Caco-2 (cell line): ENCODE measurements at regions of chr3 and their contacts with region 1.

Region 1: GRCh38 chr3:48556793-48557626 is at the start of gene PFKFB4:
- DNase-seq: peak; percentile 99
- H3K4me3 ChIP-seq: peak within 1 kb of the TSS; percentile 62
- H3K4me3 Mint-ChIP-seq: peak within 1 kb of the TSS; percentile 81
- H3K27ac Mint-ChIP-seq: peak within 1 kb of the TSS; percentile 63
- H3K4me1 ChIP-seq: peaks cover 28% of the 10 kb centered on the region
- H3K4me1 Mint-ChIP-seq: peaks cover 21% of the 10 kb centered on the region
- H3K27me3 ChIP-seq: no peaks in the 10 kb centered on the region
- H3K27me3 Mint-ChIP-seq: no peaks in the 10 kb centered on the region
- CTCF ChIP-seq: no peak
- total RNA-seq, gene PFKFB4: 11.2 and 14.4 TPM in 2 replicates

Region 2: GRCh38 chr3:48188266-48189201 is 368.5 kb before region 1 on chr3 and contains the start of gene CDC25A:
- CTCF ChIA-PET with region 1: interaction called, 9 read pairs
- POLR2A ChIA-PET with region 1: no interaction called
- intact Hi-C with region 1: loop called (anchors 5 kb)
- DNase-seq: peak; percentile 97 to 99
- H3K4me3 ChIP-seq: peak within 1 kb of the TSS; percentile 95
- H3K4me3 Mint-ChIP-seq: peak within 1 kb of the TSS; percentile 95
- H3K27ac Mint-ChIP-seq: peak within 1 kb of the TSS; percentile 90
- H3K4me1 ChIP-seq: peaks cover 9% of the 10 kb centered on the region; the same call in 1 of the 2 replicates
- H3K4me1 Mint-ChIP-seq: peaks cover 6% of the 10 kb centered on the region
- H3K27me3 ChIP-seq: no peaks in the 10 kb centered on the region
- H3K27me3 Mint-ChIP-seq: no peaks in the 10 kb centered on the region
- CTCF ChIP-seq: no peak
- total RNA-seq, gene CDC25A: 32.1 and 35.5 TPM in 2 replicates

Region 3: GRCh38 chr3:48347500-48347899 is 209.5 kb before region 1 on chr3:
- CTCF ChIA-PET with region 1: no interaction called
- POLR2A ChIA-PET with region 1: no interaction called
- intact Hi-C with region 1: no loop called
- DNase-seq: peak; percentile 18 to 69
- H3K4me3 ChIP-seq: no peak overlapping the region
- H3K4me3 Mint-ChIP-seq: no peak overlapping the region
- H3K27ac Mint-ChIP-seq: peak overlapping the region; percentile 39
- H3K4me1 ChIP-seq: peaks cover 49% of the 10 kb centered on the region
- H3K4me1 Mint-ChIP-seq: peaks cover 38% of the 10 kb centered on the region
- H3K27me3 ChIP-seq: no peaks in the 10 kb centered on the region
- H3K27me3 Mint-ChIP-seq: no peaks in the 10 kb centered on the region
- CTCF ChIP-seq: no peak

Region 4: GRCh38 chr3:48465531-48466378 is 91.3 kb before region 1 on chr3:
- CTCF ChIA-PET with region 1: interaction called, 4 read pairs
- POLR2A ChIA-PET with region 1: interaction called, 4 read pairs
- intact Hi-C with region 1: loop called (anchors 1 kb)
- DNase-seq: peak; percentile 97
- H3K4me3 ChIP-seq: no peak overlapping the region
- H3K4me3 Mint-ChIP-seq: peak overlapping the region; percentile 56
- H3K27ac Mint-ChIP-seq: peak overlapping the region; percentile 99
- H3K4me1 ChIP-seq: peaks cover 19% of the 10 kb centered on the region
- H3K4me1 Mint-ChIP-seq: peaks cover 16% of the 10 kb centered on the region
- H3K27me3 ChIP-seq: no peaks in the 10 kb centered on the region
- H3K27me3 Mint-ChIP-seq: no peaks in the 10 kb centered on the region
- CTCF ChIP-seq: peak; percentile 61 to 83

Region 5: GRCh38 chr3:48507351-48508061 is 49.5 kb before region 1 on chr3:
- CTCF ChIA-PET with region 1: interaction called, 3 read pairs
- POLR2A ChIA-PET with region 1: no interaction called
- intact Hi-C with region 1: loop called (anchors 1 kb)
- DNase-seq: peak; percentile 90 to 93
- H3K4me3 ChIP-seq: no peak overlapping the region
- H3K4me3 Mint-ChIP-seq: peak overlapping the region; percentile 7
- H3K27ac Mint-ChIP-seq: peak overlapping the region; percentile 67
- H3K4me1 ChIP-seq: peaks cover 35% of the 10 kb centered on the region
- H3K4me1 Mint-ChIP-seq: peaks cover 14% of the 10 kb centered on the region
- H3K27me3 ChIP-seq: no peaks in the 10 kb centered on the region
- H3K27me3 Mint-ChIP-seq: no peaks in the 10 kb centered on the region
- CTCF ChIP-seq: peak; percentile 81 to 91

Region 6: DNA sequence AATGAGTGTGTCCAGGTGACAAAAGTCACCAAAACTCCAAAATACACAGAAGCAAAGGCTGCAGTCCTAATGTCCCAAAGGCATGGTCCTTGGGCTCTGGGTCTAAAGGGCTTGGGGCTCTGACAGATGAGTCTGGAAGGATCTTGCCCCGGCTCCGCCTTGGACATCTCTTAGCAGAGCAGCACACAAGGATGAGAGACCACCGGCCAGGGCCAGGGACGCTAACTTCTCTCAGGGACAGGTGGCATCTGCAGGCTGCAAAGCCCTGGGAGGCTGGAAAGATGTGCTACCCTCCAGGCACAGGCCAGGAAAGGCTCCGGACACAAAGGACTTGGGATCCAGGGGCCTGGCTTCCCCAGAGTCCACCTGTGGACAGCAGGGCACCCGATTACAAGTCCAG is 38.9 kb before region 1 on chr3:
- CTCF ChIA-PET with region 1: no interaction called
- POLR2A ChIA-PET with region 1: no interaction called
- intact Hi-C with region 1: no loop called
- DNase-seq: no peak
- H3K4me3 ChIP-seq: no peak overlapping the region
- H3K4me3 Mint-ChIP-seq: no peak overlapping the region
- H3K27ac Mint-ChIP-seq: no peak overlapping the region
- H3K4me1 ChIP-seq: peaks cover 6% of the 10 kb centered on the region; the same call in 1 of the 2 replicates
- H3K4me1 Mint-ChIP-seq: no peaks in the 10 kb centered on the region
- H3K27me3 ChIP-seq: no peaks in the 10 kb centered on the region
- H3K27me3 Mint-ChIP-seq: no peaks in the 10 kb centered on the region
- CTCF ChIP-seq: no peak

Region 7: DNA sequence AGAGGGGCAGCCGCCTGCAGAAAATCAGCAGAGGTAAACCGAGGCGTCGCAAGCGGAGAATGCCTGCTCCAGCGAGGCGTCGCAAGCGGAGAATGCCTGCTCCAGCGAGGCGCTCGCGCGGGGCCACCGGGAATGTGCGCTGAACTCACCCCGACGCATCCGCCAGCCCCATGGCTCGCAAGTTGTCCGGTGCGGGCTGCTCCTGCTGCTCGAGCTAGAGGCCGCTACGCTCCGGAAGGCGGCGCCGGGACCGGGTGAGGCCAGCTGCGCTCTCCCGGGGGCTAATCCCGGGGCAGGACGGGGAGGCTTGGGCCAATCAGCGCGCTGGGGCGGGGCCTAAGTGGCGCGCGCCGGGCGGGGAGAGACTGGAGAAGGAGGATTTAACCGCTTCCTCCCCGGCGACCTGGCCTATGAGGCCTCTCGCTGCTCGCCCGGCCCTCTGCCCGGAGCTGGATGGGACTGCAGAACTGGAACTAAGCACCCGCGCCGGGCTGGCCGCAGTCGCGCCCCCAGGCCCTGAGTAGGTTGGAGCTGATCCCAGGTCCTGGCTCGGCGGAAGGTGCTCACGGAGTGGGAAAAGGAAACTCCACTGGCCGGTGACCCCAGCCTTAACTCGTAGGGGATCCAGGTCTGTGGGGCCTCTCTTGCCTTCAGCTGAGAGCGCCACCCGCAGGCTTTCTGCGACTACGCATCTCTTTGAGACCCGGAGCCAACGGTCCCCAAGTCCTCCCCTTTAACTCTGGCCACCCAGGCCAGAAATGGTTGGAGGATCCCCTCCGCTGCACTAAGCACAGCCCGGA is 78.4 kb after region 1 on chr3 and contains the start of gene SLC26A6:
- CTCF ChIA-PET with region 1: interaction called, 4 read pairs
- POLR2A ChIA-PET with region 1: interaction called, 4 read pairs
- intact Hi-C with region 1: loop called (anchors 2 kb)
- DNase-seq: peak; percentile 96 to 98
- H3K4me3 ChIP-seq: peak within 1 kb of the TSS; percentile 83
- H3K4me3 Mint-ChIP-seq: peak within 1 kb of the TSS; percentile 78
- H3K27ac Mint-ChIP-seq: peak within 1 kb of the TSS; percentile 59
- H3K4me1 ChIP-seq: peaks cover 19% of the 10 kb centered on the region
- H3K4me1 Mint-ChIP-seq: peaks cover 21% of the 10 kb centered on the region
- H3K27me3 ChIP-seq: no peaks in the 10 kb centered on the region
- H3K27me3 Mint-ChIP-seq: no peaks in the 10 kb centered on the region
- CTCF ChIP-seq: peak in 1 of 2 experiments; percentile 43
- total RNA-seq, gene SLC26A6: 54.7 and 59.4 TPM in 2 replicates

Region 8: GRCh38 chr3:48885753-48886152 is 328.7 kb after region 1 on chr3:
- CTCF ChIA-PET with region 1: no interaction called
- POLR2A ChIA-PET with region 1: no interaction called
- intact Hi-C with region 1: no loop called
- DNase-seq: no peak
- H3K4me3 ChIP-seq: no peak overlapping the region
- H3K4me3 Mint-ChIP-seq: no peak overlapping the region
- H3K27ac Mint-ChIP-seq: no peak overlapping the region
- H3K4me1 ChIP-seq: no peaks in the 10 kb centered on the region
- H3K4me1 Mint-ChIP-seq: no peaks in the 10 kb centered on the region
- H3K27me3 ChIP-seq: no peaks in the 10 kb centered on the region
- H3K27me3 Mint-ChIP-seq: no peaks in the 10 kb centered on the region
- CTCF ChIP-seq: no peak

Region 9: DNA sequence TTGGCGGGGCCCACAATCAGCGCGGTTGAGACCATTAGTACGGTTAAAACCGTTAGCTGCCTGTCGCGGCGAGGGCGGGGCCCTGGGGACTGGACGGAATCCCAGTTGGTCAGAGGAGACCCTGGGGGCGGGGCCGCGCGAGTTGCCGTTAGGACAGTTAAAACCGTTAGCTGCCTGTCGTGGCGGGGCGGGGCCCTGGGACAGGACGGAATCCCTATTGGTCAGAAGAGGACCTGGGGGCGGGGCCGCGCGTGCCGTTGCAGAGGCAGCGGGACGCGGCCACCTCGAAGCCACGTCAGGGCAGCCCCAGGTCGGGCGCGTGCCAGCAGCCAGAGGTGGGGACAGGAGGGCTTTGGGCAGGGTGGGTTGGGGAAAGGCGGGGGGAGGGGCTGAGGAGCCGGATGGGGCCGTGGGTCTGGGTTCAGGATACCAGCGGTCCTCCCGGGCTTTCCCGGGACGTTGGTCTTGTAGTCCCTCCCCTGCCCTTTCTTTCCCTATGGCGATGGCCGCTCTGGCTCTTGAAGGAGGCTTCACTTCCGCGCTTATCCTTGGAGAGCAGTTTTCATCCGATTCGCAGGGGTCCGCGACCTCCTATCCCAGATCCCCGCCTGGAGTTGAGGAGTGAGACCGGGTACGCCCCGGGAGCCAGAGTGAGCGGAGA is 642.4 kb after region 1 on chr3:
- CTCF ChIA-PET with region 1: no interaction called
- POLR2A ChIA-PET with region 1: no interaction called
- intact Hi-C with region 1: no loop called
- DNase-seq: no peak
- H3K4me3 ChIP-seq: no peak overlapping the region
- H3K4me3 Mint-ChIP-seq: no peak overlapping the region
- H3K27ac Mint-ChIP-seq: no peak overlapping the region
- H3K4me1 ChIP-seq: no peaks in the 10 kb centered on the region
- H3K4me1 Mint-ChIP-seq: no peaks in the 10 kb centered on the region
- H3K27me3 ChIP-seq: no peaks in the 10 kb centered on the region
- H3K27me3 Mint-ChIP-seq: peaks cover 4% of the 10 kb centered on the region
- CTCF ChIP-seq: no peak